ENCODE measurements at regions of chr13 and their contacts with region 1.

Region 1: DNA sequence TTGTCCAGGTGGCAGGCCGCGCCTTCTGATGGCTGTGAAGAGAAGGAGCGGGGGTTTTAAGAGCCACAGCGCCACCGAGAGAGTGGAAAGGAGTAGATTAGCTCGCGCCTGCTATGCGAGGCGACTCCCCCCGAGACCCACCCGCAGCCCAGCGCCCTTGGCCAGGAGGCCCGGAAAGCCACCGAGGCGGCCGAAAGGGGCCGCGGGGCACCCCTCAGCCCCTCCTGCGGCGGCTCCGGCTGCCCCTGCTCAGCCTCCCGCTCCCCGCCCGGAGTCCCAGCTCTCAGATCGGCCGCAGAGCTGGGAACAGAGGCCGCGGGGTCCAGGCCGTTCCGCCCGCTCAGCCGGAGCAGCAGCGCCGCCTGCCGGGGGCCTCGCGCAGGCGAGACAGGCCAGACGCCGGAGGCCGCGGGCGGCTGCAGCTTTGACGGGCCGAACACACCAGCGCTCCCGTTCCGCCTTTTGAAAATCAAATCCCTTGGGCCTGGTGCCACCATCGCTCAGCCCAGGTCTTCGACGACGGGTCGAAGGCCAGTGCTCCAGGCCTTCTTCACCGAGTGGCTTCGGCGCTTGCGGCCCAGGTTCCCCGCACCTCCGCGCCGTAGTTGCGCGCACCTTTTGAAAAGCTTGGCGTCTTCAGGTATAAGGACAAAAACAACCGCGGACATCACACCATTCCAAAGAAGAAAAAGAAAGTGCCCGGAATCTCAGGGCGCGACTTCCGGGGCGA is 15.3 kb downstream of the CDX2 start:
- DNase-seq: peak; percentile 56
- H3K4me3 Mint-ChIP-seq: peak overlapping the region; percentile 62
- H3K27ac Mint-ChIP-seq: peak overlapping the region; percentile 19
- H3K4me1 Mint-ChIP-seq: peaks cover 16% of the 10 kb centered on the region
- H3K27me3 Mint-ChIP-seq: peaks cover 69% of the 10 kb centered on the region

Region 2: GRCh38 chr13:27826379-27827353 is 127.2 kb before region 1 on chr13:
- CTCF ChIA-PET with region 1: interaction called, 15 read pairs
- POLR2A ChIA-PET with region 1: no interaction called
- DNase-seq: peak; percentile 70
- H3K4me3 Mint-ChIP-seq: peak overlapping the region; percentile 4
- H3K27ac Mint-ChIP-seq: no peak overlapping the region
- H3K4me1 Mint-ChIP-seq: peaks cover 5% of the 10 kb centered on the region
- H3K27me3 Mint-ChIP-seq: peaks cover 62% of the 10 kb centered on the region

Region 3: GRCh38 chr13:27926644-27927434 is 27.0 kb before region 1 on chr13:
- CTCF ChIA-PET with region 1: interaction called, 21 read pairs
- POLR2A ChIA-PET with region 1: no interaction called
- DNase-seq: no peak
- H3K4me3 Mint-ChIP-seq: no peak overlapping the region
- H3K27ac Mint-ChIP-seq: no peak overlapping the region
- H3K4me1 Mint-ChIP-seq: peaks cover 10% of the 10 kb centered on the region
- H3K27me3 Mint-ChIP-seq: peaks cover 91% of the 10 kb centered on the region